ENCODE measurements at regions of chr11 and their contacts with region 1.

Region 1: DNA sequence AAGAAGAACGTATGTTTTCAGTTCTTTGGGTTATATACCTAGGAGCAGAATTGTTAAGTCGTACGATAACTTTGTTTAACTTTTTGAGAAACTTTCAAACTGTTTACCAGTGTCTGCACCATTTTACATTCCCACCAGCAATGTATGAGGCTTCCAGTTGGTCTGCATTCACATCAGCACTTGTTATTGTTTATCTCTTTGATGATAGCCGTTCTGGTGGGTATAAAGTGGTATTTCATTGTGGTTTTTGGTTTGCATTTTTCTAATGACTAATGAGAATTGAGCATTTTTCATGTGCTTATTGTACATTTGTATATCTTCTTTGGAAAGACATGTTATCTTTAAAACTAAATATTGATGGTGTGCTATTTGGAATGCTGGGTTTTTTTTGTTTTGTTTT is 59.8 kb downstream of the KDM2A start:
- DNase-seq: no peak
- H3K4me3 ChIP-seq: no peak overlapping the region
- H3K27ac ChIP-seq: no peak overlapping the region
- H3K4me1 ChIP-seq: peaks cover 8% of the 10 kb centered on the region
- H3K27me3 ChIP-seq: no peaks in the 10 kb centered on the region
- CTCF ChIP-seq: no peak

Region 2: GRCh38 chr11:66523462-66524010 is 655.3 kb before region 1 on chr11:
- CTCF ChIA-PET with region 1: interaction called, 24 read pairs
- POLR2A ChIA-PET with region 1: no interaction called
- intact Hi-C with region 1: no loop called
- DNase-seq: no peak
- H3K4me3 ChIP-seq: no peak overlapping the region
- H3K27ac ChIP-seq: no peak overlapping the region
- H3K4me1 ChIP-seq: no peaks in the 10 kb centered on the region
- H3K27me3 ChIP-seq: no peaks in the 10 kb centered on the region
- CTCF ChIP-seq: no peak

Region 3: DNA sequence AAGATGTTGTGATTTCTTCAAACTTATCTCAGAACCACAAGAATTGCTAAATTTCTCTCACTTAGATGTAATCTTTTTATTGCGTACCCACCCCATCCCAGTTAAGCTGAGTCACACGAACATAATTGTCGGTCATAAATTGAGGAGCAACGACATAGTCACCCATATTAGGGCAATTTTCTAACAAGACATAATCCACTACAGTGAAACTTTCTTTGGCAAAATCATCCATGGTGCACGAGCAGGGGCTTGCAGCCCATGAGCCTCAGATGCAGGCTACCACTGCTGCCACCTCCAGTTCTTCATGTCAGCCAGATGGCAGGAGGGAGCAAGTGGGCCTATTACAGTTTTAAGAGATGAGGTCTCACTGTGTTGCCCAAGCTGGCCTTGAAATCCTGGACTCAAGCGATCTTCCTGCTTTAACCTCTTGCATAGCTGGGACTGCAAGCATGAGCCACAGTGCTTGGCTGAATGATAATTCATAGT is 17.1 kb after region 1 on chr11:
- CTCF ChIA-PET with region 1: no interaction called
- POLR2A ChIA-PET with region 1: no interaction called
- intact Hi-C with region 1: no loop called
- DNase-seq: no peak
- H3K4me3 ChIP-seq: no peak overlapping the region
- H3K27ac ChIP-seq: no peak overlapping the region
- H3K4me1 ChIP-seq: no peaks in the 10 kb centered on the region
- H3K27me3 ChIP-seq: no peaks in the 10 kb centered on the region
- CTCF ChIP-seq: no peak

Region 4: GRCh38 chr11:67248653-67249052 is 69.8 kb after region 1 on chr11:
- CTCF ChIA-PET with region 1: no interaction called
- POLR2A ChIA-PET with region 1: no interaction called
- intact Hi-C with region 1: no loop called
- DNase-seq: peak; percentile 97 to 98
- H3K4me3 ChIP-seq: no peak overlapping the region; the same call in 1 of the 2 replicates
- H3K27ac ChIP-seq: peak overlapping the region; percentile 81
- H3K4me1 ChIP-seq: peaks cover 73% of the 10 kb centered on the region
- H3K27me3 ChIP-seq: no peaks in the 10 kb centered on the region
- CTCF ChIP-seq: no peak

Measured in PC-9 (cell line).